Activated CD4-positive, alpha-beta T cell treated with anti-CD3 and anti-CD28 coated beads, Interleukin-2, amount 10 ng/mL, durations not matched to agents 24 days and 14 days (primary cell): ENCODE measurements at regions of chr3 and their contacts with region 1.

Region 1: GRCh38 chr3:41198950-41199865 is at the start of gene CTNNB1:
- DNase-seq: peak; percentile 97
- H3K4me3 Mint-ChIP-seq: peak within 1 kb of the TSS; percentile 96
- H3K27ac Mint-ChIP-seq: peak within 1 kb of the TSS; percentile 96
- H3K4me1 Mint-ChIP-seq: peaks cover 24% of the 10 kb centered on the region
- H3K27me3 Mint-ChIP-seq: peaks cover 21% of the 10 kb centered on the region
- total RNA-seq, gene CTNNB1: 142 and 147 TPM in 2 replicates

Region 2: GRCh38 chr3:40309418-40309924 is 889.7 kb before region 1 on chr3 and contains the start of gene EIF1B:
- intact Hi-C with region 1: loop called (anchors 5 kb)
- DNase-seq: peak; percentile 100
- H3K4me3 Mint-ChIP-seq: peak within 1 kb of the TSS; percentile 100
- H3K27ac Mint-ChIP-seq: peak within 1 kb of the TSS; percentile 99
- H3K4me1 Mint-ChIP-seq: peaks cover 17% of the 10 kb centered on the region
- H3K27me3 Mint-ChIP-seq: no peaks in the 10 kb centered on the region
- total RNA-seq, gene EIF1B: 46.1 and 47.7 TPM in 2 replicates

Region 3: GRCh38 chr3:40524568-40525285 is 674.5 kb before region 1 on chr3 and contains the start of gene ZNF621:
- intact Hi-C with region 1: loop called (anchors 5 kb)
- DNase-seq: peak; percentile 97
- H3K4me3 Mint-ChIP-seq: peak within 1 kb of the TSS; percentile 92
- H3K27ac Mint-ChIP-seq: peak within 1 kb of the TSS; percentile 93
- H3K4me1 Mint-ChIP-seq: peaks cover 20% of the 10 kb centered on the region
- H3K27me3 Mint-ChIP-seq: no peaks in the 10 kb centered on the region
- total RNA-seq, gene ZNF621: 18.6 and 19.2 TPM in 2 replicates

Region 4: GRCh38 chr3:40971191-40972168 is 227.7 kb before region 1 on chr3:
- intact Hi-C with region 1: loop called (anchors 1 kb)
- DNase-seq: peak; percentile 77
- H3K4me3 Mint-ChIP-seq: peak overlapping the region; percentile 77
- H3K27ac Mint-ChIP-seq: peak overlapping the region; percentile 98
- H3K4me1 Mint-ChIP-seq: peaks cover 53% of the 10 kb centered on the region
- H3K27me3 Mint-ChIP-seq: no peaks in the 10 kb centered on the region

Region 5: DNA sequence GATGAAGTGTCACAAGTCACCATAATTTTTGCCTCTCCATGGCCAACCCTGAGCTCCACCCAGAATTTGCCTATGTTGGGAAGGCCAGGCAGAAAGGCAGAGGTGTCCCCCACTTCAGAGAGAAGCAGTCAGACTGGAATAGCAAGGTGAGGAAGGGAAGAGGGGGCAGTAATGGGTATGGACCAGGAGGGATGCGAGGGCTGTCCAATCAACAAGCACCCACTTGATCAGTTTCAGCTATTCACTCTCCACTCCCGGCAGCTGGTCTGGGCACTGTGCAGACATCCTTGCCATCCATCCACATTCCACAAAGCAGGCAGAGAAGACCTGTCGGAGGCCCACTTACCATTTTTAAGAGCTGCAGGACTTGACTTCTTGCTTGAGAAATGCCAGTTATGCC is 43.4 kb before region 1 on chr3:
- intact Hi-C with region 1: no loop called
- DNase-seq: no peak
- H3K4me3 Mint-ChIP-seq: no peak overlapping the region
- H3K27ac Mint-ChIP-seq: no peak overlapping the region
- H3K4me1 Mint-ChIP-seq: peaks cover 13% of the 10 kb centered on the region
- H3K27me3 Mint-ChIP-seq: peaks cover 5% of the 10 kb centered on the region

Region 6: GRCh38 chr3:41167722-41168497 is 31.3 kb before region 1 on chr3:
- intact Hi-C with region 1: loop called (anchors 1 kb)
- DNase-seq: no peak
- H3K4me3 Mint-ChIP-seq: no peak overlapping the region
- H3K27ac Mint-ChIP-seq: peak overlapping the region; percentile 17
- H3K4me1 Mint-ChIP-seq: peaks cover 11% of the 10 kb centered on the region
- H3K27me3 Mint-ChIP-seq: peaks cover 15% of the 10 kb centered on the region

Region 7: GRCh38 chr3:41881233-41881821 is 682.1 kb after region 1 on chr3:
- intact Hi-C with region 1: loop called (anchors 5 kb)
- DNase-seq: peak; percentile 76
- H3K4me3 Mint-ChIP-seq: no peak overlapping the region
- H3K27ac Mint-ChIP-seq: no peak overlapping the region
- H3K4me1 Mint-ChIP-seq: no peaks in the 10 kb centered on the region
- H3K27me3 Mint-ChIP-seq: no peaks in the 10 kb centered on the region